B cell (primary cell): ENCODE measurements at regions of chr9 and their contacts with region 1.

Region 1: DNA sequence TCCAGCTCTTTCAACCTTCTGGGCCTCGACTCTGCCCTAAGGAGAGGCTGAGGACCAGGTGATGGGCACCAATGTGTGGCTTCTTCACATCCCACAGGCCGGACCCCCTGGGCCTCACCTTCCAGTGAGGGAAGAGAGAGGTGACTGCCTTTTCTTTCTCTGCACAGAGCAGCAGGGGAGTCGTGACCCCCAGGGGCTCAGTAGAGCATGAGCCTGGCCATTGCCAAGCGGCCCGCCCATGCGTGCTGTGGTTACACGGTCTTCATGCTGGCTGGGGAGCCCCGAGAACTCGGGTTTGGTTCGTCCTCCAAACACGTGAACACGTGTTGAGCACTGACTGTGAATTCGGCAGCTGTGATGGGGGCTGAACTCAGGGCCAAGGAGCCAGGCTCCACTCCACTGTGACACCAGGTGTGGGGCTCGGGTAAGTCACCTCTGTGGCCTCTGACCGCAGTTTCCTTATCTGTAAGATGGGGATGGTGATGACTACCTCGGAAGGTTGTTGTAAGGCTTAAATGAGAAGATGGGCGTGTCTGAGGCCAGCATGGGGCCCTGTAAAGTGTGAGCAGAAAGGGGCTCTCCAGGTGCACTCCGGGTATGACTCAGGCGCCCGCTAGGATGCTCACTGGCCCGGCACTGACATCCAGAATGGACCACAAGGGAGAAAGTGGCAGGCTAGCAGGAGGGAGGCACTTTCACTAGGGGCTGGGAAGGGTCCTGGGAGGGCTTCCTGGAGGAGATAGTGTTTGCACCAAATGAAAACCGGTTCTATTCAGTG is 13.4 kb upstream of the GRHPR start:
- DNase-seq: peak; percentile 99
- ATAC-seq: peak; percentile 82
- H3K4me3 ChIP-seq: no peak overlapping the region
- H3K4me3 Mint-ChIP-seq: peak overlapping the region; percentile 78
- H3K27ac ChIP-seq: peak overlapping the region; percentile 72 to 91
- H3K27ac Mint-ChIP-seq: peak overlapping the region; percentile 97
- H3K4me1 ChIP-seq: peaks cover 58 to 72% of the 10 kb centered on the region in 2 donors
- H3K4me1 Mint-ChIP-seq: peaks cover 78% of the 10 kb centered on the region
- H3K27me3 ChIP-seq: no peaks in the 10 kb centered on the region
- H3K27me3 Mint-ChIP-seq: no peaks in the 10 kb centered on the region
- CTCF ChIP-seq: peak; percentile 31

Region 2: DNA sequence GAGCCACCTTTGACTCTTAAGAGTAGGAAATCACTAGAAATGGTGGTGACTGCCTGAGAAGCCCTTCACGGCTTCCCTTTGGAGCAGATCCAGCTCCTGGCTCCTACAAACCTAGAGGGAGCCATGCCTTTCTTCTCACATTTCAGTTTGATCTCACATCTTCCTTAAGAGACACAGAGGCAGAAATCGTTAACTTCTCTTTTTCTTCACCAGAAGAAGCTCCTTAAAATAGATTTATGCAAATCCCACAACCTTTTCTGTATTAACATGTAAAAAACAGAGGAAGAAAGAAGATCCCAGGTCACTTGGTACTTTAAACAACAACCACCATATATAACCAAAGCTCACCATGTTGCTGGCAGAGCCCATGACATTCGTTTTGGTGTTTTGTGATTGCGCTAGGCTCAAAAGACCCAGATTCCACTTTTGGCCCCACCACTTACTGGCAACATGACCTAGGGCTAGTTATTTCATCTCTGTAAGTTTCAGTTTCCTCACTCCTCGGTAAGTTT is 404.6 kb before region 1 on chr9:
- CTCF ChIA-PET with region 1: no interaction called
- POLR2A ChIA-PET with region 1: no interaction called
- intact Hi-C with region 1: loop called (anchors 1 kb)
- DNase-seq: peak; percentile 78
- ATAC-seq: peak; percentile 46
- H3K4me3 ChIP-seq: peak overlapping the region; percentile 28 to 77 (median 61)
- H3K4me3 Mint-ChIP-seq: peak overlapping the region; percentile 75
- H3K27ac ChIP-seq: peak overlapping the region; percentile 77 to 83
- H3K27ac Mint-ChIP-seq: peak overlapping the region; percentile 99
- H3K4me1 ChIP-seq: peaks cover 97% of the 10 kb centered on the region in 2 donors
- H3K4me1 Mint-ChIP-seq: peaks cover 93% of the 10 kb centered on the region
- H3K27me3 ChIP-seq: no peaks in the 10 kb centered on the region
- H3K27me3 Mint-ChIP-seq: no peaks in the 10 kb centered on the region
- CTCF ChIP-seq: no peak

Region 3: DNA sequence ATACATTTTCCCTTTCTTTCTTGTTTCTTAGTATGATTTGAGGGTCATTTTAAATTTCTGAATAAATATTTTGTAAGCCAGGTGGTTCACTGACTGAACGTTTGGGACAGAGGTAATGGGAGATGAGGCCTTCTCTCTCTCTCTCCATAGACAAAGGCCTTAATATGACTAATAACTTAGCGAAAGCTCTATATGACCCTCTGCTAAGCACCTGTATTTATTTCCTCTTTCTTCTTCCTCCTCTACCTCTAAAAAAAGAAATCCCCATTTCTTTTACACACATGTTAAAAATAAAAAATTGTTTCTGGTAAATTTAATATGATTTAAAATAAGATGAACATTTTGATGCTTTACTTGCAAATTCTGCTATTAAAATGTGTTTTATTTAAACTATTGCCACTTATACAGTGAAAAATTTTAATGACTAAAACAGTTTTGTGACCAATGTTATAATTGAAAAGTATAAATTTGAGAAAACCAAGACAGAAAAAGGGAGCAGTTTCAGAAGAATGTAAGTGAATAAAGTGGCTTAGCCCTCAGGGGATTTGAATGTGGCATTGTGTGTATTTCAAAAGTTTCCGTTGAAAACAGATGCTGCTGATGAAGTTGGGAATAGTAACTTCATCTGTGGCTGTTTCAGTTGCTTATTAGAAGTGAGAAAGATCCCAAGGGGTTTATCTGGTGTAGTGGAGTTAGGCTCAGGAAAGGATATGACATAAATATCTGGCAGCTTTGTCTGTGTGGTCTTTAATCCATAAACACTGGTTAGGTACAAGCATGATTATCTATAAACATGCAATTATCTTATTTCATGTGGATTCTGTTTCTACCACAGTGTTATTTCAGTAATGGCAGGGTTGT is 115.2 kb before region 1 on chr9:
- CTCF ChIA-PET with region 1: no interaction called
- POLR2A ChIA-PET with region 1: no interaction called
- intact Hi-C with region 1: loop called (anchors 1 kb)
- DNase-seq: peak; percentile 81
- ATAC-seq: peak; percentile 70
- H3K4me3 ChIP-seq: peak overlapping the region in 3 of 5 experiments; percentile 4 to 8 (median 7)
- H3K4me3 Mint-ChIP-seq: peak overlapping the region; percentile 74
- H3K27ac ChIP-seq: peak overlapping the region; percentile 79 to 88
- H3K27ac Mint-ChIP-seq: peak overlapping the region; percentile 95
- H3K4me1 ChIP-seq: peaks cover 79 to 97% of the 10 kb centered on the region in 2 donors
- H3K4me1 Mint-ChIP-seq: peaks cover 82% of the 10 kb centered on the region
- H3K27me3 ChIP-seq: no peaks in the 10 kb centered on the region
- H3K27me3 Mint-ChIP-seq: no peaks in the 10 kb centered on the region
- CTCF ChIP-seq: no peak

Region 4: DNA sequence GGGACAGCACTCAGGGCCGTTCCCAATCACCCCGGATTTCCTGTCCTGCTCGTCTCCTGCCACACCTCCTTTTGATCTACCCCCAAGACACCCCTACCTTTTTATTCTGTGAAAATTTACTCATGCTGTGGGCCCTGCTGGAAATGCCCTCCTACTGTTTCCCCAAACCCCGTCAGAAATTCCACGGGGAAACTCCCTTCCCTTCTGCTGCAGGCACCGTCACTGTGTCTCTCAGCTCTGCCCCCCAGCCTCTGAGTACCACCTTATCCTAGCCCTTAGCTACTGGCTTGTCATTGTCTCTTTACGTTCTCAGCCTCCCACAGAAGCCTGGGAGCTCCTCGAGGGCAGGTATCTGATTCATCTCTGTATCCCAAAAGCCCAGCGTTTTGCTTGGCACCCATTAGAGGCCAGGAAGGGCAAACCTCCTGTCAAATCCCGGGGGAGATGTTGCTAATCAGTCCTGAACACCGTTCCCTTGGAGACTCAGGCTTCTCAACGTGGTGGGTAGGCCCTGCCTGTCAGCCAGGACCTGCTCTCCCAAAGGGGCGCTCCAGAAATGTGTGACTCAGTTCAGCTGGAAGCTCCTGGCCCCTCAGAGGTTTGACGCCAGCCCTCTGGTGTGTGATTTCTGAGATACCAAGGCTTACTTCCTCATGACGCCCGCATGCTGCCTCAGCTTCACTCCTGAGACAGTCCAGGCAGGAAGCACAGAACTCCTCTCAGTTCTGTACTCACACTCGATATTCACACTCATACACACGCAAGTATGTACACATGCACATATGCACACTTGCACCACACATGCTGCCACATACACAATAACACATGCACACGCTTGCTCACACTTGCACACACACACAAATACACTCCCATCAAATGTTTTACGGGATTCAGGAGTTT is 37.3 kb before region 1 on chr9:
- CTCF ChIA-PET with region 1: interaction called, 125 read pairs
- POLR2A ChIA-PET with region 1: interaction called, 22 read pairs
- intact Hi-C with region 1: loop called (anchors 1 kb)
- DNase-seq: peak; percentile 74
- ATAC-seq: peak; percentile 4
- H3K4me3 ChIP-seq: peak overlapping the region in 2 of 5 experiments; percentile 25 to 38
- H3K4me3 Mint-ChIP-seq: peak overlapping the region; percentile 70
- H3K27ac ChIP-seq: peak overlapping the region; percentile 78 to 94
- H3K27ac Mint-ChIP-seq: peak overlapping the region; percentile 88
- H3K4me1 ChIP-seq: peaks cover 95 to 100% of the 10 kb centered on the region in 2 donors
- H3K4me1 Mint-ChIP-seq: peaks cover 88% of the 10 kb centered on the region
- H3K27me3 ChIP-seq: no peaks in the 10 kb centered on the region
- H3K27me3 Mint-ChIP-seq: no peaks in the 10 kb centered on the region
- CTCF ChIP-seq: no peak

Region 5: DNA sequence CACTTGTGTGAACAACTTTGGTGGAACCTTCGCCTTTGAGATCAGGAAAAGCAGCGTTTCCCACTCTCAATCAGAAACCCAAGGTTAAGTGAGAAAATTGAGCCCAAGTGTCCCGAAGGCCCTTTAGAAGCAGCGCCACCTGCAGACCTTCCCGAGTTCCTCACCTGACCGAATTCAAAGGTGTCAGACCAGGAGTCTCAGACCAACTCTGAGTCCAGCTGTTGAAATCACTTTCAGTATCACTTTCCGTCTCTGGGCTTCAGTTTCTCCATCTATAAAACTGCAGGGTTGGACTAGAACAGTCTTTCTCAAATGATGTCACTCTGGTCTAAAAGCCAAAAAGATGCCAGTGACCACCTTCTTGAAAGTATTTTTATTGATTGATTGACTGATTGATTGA is 18.4 kb before region 1 on chr9:
- CTCF ChIA-PET with region 1: interaction called, 21 read pairs
- POLR2A ChIA-PET with region 1: interaction called, 12 read pairs
- intact Hi-C with region 1: loop called (anchors 1 kb)
- DNase-seq: peak; percentile 79
- ATAC-seq: peak; percentile 66
- H3K4me3 ChIP-seq: no peak overlapping the region
- H3K4me3 Mint-ChIP-seq: peak overlapping the region; percentile 56
- H3K27ac ChIP-seq: peak overlapping the region in 1 of 2 donors; percentile 52
- H3K27ac Mint-ChIP-seq: peak overlapping the region; percentile 60
- H3K4me1 ChIP-seq: peaks cover 30 to 48% of the 10 kb centered on the region in 2 donors
- H3K4me1 Mint-ChIP-seq: peaks cover 55% of the 10 kb centered on the region
- H3K27me3 ChIP-seq: no peaks in the 10 kb centered on the region
- H3K27me3 Mint-ChIP-seq: no peaks in the 10 kb centered on the region
- CTCF ChIP-seq: peak; percentile 58

Region 6: DNA sequence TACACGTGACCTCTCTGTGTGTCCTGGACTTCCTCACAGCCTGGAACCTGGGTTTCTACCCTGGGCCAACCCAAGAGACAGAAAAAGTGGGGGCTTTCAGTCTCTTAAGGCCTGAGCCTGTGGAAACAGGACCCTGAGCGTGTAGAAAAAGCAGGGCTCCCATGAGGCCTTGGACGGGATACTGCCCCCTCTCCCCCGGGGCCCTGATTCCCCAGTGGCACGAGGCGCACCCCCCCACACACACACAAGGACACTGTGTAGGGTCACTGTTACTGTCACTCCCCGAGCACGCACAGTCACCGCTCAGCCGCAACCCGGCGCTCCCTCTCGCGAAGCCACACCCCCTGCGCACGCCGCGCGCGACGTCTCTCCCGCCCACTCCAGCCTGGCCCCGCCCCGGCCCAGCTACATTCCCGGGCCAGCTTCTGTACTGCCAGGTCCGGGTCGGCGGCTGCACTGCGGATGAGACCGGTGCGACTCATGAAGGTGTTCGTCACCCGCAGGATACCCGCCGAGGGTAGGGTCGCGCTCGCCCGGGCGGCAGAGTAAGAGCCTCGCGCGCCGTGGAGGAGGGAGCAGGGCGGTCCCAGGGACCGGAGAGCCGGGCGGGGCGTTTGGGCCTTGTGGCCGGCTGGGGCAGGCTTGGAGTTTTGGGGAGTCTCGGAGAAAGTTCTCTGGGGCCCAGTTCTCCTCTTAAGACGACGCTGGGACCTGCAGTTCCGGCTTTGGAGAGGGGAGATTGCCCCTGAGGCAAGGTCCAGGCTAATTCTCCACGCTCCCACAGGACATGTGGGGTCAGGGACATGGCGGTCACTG is 13.4 kb after region 1 on chr9 and contains the start of gene GRHPR:
- CTCF ChIA-PET with region 1: interaction called, 8 read pairs
- POLR2A ChIA-PET with region 1: interaction called, 6 read pairs
- intact Hi-C with region 1: loop called (anchors 1 kb)
- DNase-seq: peak; percentile 90
- ATAC-seq: peak; percentile 99
- H3K4me3 ChIP-seq: peak within 1 kb of the TSS; percentile 80 to 88 (median 82)
- H3K4me3 Mint-ChIP-seq: peak within 1 kb of the TSS; percentile 97
- H3K27ac ChIP-seq: peak within 1 kb of the TSS; percentile 68 to 80
- H3K27ac Mint-ChIP-seq: peak within 1 kb of the TSS; percentile 92
- H3K4me1 ChIP-seq: peaks cover 18 to 31% of the 10 kb centered on the region in 2 donors
- H3K4me1 Mint-ChIP-seq: peaks cover 28% of the 10 kb centered on the region
- H3K27me3 ChIP-seq: no peaks in the 10 kb centered on the region
- H3K27me3 Mint-ChIP-seq: no peaks in the 10 kb centered on the region
- CTCF ChIP-seq: no peak
- total RNA-seq, gene GRHPR: 121 and 122 TPM in 2 replicates